Activated B cell treated with CpG ODN at 0.5 μM for 24 hours (primary cell): ENCODE measurements at regions of chr10 and their contacts with region 1.

Region 1: DNA sequence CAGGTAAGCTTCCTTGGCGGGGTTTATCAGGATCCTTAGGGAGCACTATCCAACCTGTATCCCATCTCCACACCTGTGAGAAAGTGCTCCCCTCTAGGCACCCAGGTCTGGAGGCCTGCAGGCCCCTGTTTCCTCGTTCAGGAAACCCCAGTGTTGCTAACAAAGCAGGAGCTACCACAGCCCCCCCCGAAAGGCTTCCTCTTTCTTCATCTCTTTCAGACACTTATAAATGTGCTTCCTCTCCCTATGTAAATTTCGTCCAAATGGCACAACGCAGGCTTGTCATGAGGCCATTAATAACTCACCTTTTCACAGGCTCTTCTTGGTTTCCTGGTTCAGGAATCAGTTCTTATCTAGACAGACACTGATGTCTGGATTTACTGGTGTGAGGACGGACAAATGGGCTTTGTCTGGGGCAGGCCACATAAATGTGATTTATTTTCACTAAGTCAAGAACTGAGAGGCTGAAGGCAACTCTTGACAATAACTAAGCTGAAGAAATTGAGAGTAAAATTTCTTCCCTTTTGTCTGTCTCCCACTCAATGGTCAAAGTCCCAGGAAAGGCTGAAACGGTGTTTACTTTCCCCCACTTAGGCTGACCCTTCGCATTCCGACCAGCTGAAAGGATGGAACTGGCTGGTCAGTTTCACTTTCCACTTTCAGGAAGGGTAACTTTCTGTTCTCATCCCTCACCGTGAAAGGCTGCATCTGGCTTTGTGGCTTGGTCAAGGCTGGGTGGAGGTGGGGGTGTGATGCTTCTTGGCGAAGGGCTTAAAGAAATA is 46.8 kb downstream of the PIK3AP1 start:
- DNase-seq: peak; percentile 39
- ATAC-seq: peak; percentile 83
- H3K4me3 Mint-ChIP-seq: peak overlapping the region; percentile 77
- H3K27ac Mint-ChIP-seq: peak overlapping the region; percentile 99
- H3K4me1 Mint-ChIP-seq: peaks cover 90% of the 10 kb centered on the region
- H3K27me3 Mint-ChIP-seq: no peaks in the 10 kb centered on the region
- CTCF ChIP-seq: no peak

Region 2: GRCh38 chr10:96287392-96288105 is 386.0 kb before region 1 on chr10:
- CTCF ChIA-PET with region 1: no interaction called
- POLR2A ChIA-PET with region 1: no interaction called
- intact Hi-C with region 1: no loop called
- DNase-seq: no peak
- ATAC-seq: peak; percentile 72
- H3K4me3 Mint-ChIP-seq: peak overlapping the region; percentile 75
- H3K27ac Mint-ChIP-seq: peak overlapping the region; percentile 96
- H3K4me1 Mint-ChIP-seq: peaks cover 75% of the 10 kb centered on the region
- H3K27me3 Mint-ChIP-seq: no peaks in the 10 kb centered on the region
- CTCF ChIP-seq: no peak

Region 3: GRCh38 chr10:96651998-96652431 is 21.5 kb before region 1 on chr10:
- CTCF ChIA-PET with region 1: interaction called, 3 read pairs
- POLR2A ChIA-PET with region 1: interaction called, 24 read pairs
- intact Hi-C with region 1: loop called (anchors 1 kb)
- DNase-seq: peak; percentile 42
- ATAC-seq: peak; percentile 85
- H3K4me3 Mint-ChIP-seq: peak overlapping the region; percentile 60
- H3K27ac Mint-ChIP-seq: peak overlapping the region; percentile 89
- H3K4me1 Mint-ChIP-seq: peaks cover 87% of the 10 kb centered on the region
- H3K27me3 Mint-ChIP-seq: no peaks in the 10 kb centered on the region
- CTCF ChIP-seq: no peak

Region 4: DNA sequence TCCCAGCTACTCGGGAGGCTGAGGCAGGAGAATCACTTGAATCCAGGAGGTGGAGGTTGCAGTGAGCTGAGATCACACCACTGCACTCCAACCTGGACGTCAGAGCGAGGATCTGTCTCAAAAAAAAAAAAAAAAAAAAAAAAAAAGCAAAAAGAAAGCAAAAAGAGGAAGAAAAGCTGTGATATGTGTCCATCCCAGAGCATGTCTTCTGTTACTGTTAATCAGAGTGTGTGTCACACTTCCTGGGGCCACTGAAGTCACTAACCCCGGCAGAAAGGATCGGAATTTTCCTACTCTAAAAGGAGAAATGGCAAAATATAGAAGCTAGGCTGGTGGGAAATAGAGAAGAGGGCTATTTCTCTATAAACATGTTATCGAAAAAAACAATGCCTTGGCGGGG is 34.9 kb after region 1 on chr10:
- CTCF ChIA-PET with region 1: interaction called, 3 read pairs
- POLR2A ChIA-PET with region 1: interaction called, 7 read pairs
- intact Hi-C with region 1: loop called (anchors 1 kb)
- DNase-seq: no peak
- ATAC-seq: peak; percentile 77
- H3K4me3 Mint-ChIP-seq: peak overlapping the region; percentile 69
- H3K27ac Mint-ChIP-seq: peak overlapping the region; percentile 96
- H3K4me1 Mint-ChIP-seq: peaks cover 83% of the 10 kb centered on the region
- H3K27me3 Mint-ChIP-seq: no peaks in the 10 kb centered on the region
- CTCF ChIP-seq: no peak

Region 5: DNA sequence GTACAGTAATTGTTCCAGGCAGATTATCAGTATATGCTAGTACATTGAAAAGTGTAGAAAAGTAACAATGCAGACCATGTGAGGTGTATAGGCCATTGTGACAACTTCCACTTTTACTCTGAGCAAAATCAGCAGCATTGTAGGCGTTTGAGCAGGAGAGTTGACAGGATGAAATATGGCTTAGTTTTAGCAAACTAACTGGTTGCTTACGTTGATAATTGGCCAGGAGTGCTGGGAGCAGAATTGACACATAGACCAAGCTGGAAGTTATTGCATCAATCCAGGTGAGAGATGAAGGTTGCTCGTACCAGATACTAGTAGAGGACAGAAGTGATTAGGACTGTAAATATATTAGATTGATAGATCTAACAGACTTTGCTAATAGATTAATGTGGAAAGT is 204.5 kb after region 1 on chr10:
- CTCF ChIA-PET with region 1: no interaction called
- POLR2A ChIA-PET with region 1: no interaction called
- intact Hi-C with region 1: no loop called
- DNase-seq: no peak
- ATAC-seq: no peak
- H3K4me3 Mint-ChIP-seq: no peak overlapping the region
- H3K27ac Mint-ChIP-seq: no peak overlapping the region
- H3K4me1 Mint-ChIP-seq: peaks cover 70% of the 10 kb centered on the region
- H3K27me3 Mint-ChIP-seq: no peaks in the 10 kb centered on the region
- CTCF ChIP-seq: no peak